ENCODE measurements at regions of chr15 and their contacts with region 1.

Region 1: DNA sequence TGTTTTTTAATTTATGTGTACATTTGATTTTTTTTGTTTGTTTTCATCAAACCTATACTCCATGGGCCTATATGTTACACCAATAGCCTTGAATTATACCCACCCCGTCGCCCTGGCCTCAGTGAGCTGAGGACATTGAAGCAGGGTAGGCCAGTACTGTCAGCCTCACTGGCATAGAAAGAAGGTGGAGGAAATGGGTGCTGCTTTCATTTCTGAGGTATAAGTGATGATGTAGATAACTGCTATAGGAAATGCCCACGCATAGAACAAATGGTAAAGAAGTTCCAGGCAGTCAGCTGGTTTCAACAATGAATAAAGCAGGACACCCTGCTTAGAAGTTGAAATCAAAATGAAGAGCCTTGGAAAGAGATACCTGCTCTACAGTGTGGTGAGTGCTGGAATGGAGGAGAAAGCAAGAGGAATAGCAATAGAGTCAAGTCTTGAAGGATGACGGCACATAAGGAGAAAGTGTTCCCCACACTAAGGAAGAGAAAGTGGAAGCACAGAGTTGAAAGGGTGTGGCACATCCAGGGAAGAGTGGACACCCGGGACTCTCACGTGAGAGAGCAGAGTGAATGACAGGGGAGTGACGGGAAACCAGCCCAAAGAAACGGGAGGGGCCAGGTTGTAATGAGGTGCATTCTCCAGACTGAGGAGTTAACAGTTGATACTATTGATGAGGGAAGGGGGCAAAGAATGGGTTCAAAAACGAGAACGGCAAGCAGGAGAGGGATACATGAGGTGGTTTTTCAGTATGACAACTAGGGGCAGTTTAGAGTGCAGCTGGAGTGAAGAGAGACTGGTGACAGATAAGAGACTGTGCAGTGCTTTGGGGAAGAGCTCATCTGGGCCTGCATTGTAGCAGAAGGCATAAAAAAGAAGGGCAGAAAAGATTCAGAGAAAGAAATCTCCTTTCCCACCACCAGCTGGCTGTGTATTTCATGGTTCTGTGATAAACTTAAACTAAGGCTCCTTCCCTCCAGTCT is 70.5 kb downstream of the KLHL25 start:
- DNase-seq: no peak
- ATAC-seq: peak; percentile 33 to 64 (median 50)
- H3K4me3 ChIP-seq: peak overlapping the region in 8 of 12 donors; percentile 13 to 51 (median 22)
- H3K27ac ChIP-seq: peak overlapping the region; percentile 48 to 82 (median 70)
- H3K4me1 ChIP-seq: peaks cover 3 to 84% (median 51%) of the 10 kb centered on the region in 12 donors
- H3K27me3 ChIP-seq: no peaks in the 10 kb centered on the region
- CTCF ChIP-seq: peak in 2 of 12 donors; percentile 12 to 14
- POLR2A ChIP-seq: no peak

Region 2: GRCh38 chr15:85618956-85619491 is 105.2 kb before region 1 on chr15:
- intact Hi-C with region 1: loop called in 2 of 10 experiments (anchors 5 kb)
- DNase-seq: peak; percentile 77 to 86 (median 81)
- ATAC-seq: peak; percentile 55 to 88 (median 77)
- H3K4me3 ChIP-seq: peak overlapping the region in 11 of 12 donors; percentile 14 to 69 (median 56)
- H3K27ac ChIP-seq: peak overlapping the region; percentile 68 to 91 (median 82)
- H3K4me1 ChIP-seq: peaks cover 21 to 100% (median 96%) of the 10 kb centered on the region in 12 donors
- H3K27me3 ChIP-seq: no peaks in the 10 kb centered on the region
- CTCF ChIP-seq: no peak
- POLR2A ChIP-seq: peak in 1 of 2 donors; percentile 56

Region 3: DNA sequence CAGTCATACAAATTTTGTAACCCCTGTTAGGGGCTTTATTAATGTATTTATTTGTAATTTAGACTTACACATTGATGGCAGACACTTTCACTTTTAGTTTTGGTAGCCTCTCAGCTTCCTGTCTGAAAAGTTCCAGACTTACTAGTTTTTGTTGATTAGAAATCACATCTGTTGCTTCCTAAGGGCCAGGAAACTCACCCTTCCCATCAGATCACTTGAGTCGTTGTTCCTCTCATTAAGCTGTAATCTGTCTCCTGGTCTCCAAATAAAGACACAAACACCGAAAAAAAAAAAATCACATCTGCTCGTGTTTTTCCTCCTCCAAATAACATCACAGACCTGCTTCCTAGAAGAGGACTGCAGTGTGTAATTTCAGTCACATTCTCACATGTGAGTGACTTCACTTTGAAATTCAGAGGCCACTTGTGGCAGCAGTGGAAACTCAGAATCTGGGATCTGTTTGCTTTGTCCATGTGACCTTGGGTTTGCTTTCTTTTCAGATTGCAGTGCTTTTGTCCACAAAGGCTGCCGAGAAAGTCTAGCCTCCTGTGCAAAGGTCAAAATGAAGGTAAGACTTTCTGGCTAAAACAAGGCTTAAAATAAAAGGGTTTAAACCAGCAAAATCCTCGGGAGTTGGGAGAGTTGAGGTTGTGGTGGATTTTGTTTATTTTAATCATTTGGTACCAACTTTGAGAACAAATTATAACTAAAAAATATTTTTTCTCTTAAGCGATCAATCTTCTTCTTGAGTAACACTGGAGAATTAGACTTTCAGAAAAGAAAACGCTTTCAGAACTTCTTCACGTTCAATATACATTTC is 16.5 kb before region 1 on chr15:
- intact Hi-C with region 1: no loop called
- DNase-seq: peak in 1 of 5 donors; percentile 35
- ATAC-seq: peak; percentile 25 to 48 (median 28)
- H3K4me3 ChIP-seq: peak overlapping the region in 9 of 12 donors; percentile 10 to 46 (median 21)
- H3K27ac ChIP-seq: peak overlapping the region; percentile 70 to 97 (median 86)
- H3K4me1 ChIP-seq: peaks cover 3 to 87% (median 63%) of the 10 kb centered on the region in 12 donors
- H3K27me3 ChIP-seq: no peaks in the 10 kb centered on the region
- CTCF ChIP-seq: no peak
- POLR2A ChIP-seq: no peak